RWPE1 (cell line): ENCODE measurements at regions of chr6 and their contacts with region 1.

Region 1: DNA sequence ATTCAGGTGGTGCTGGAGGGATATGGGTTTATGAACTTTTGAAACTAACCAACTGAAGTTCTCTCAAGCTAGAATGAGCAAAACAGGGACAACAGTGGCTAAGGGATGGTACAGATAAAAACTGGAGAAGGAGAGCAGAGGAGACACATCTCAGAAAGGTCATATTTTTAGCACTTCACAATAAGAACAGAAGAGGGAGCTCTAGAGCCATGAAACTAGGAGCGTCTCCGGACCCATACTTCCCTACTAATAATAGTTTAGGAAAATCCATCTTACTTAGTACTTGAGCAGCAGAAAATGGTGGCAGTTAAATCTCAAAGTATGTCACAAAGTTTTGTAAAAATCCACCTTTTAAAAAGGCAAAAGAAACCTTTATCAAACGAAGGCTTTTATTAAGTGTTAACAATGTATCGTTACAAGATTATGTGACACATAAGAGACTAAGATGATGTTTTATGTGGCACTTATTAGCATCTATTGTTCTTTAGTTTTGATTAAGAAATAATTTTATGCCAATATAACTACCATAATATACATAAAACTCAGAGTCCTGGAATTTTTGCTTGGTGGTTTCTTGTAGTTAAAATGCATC is 278.6 kb downstream of the TBC1D32 start:
- DNase-seq: peak; percentile 42
- H3K27ac ChIP-seq: no peak overlapping the region
- CTCF ChIP-seq: peak; percentile 79

Region 2: GRCh38 chr6:121305957-121306607 is 250.4 kb after region 1 on chr6:
- CTCF ChIA-PET with region 1: interaction called, 10 read pairs
- POLR2A ChIA-PET with region 1: no interaction called
- DNase-seq: peak; percentile 40
- H3K27ac ChIP-seq: no peak overlapping the region
- CTCF ChIP-seq: peak; percentile 65